ENCODE measurements at regions of chr16 and their contacts with region 1.

Region 1: GRCh38 chr16:50354629-50355456 is 13.9 kb downstream of the BRD7 start:
- DNase-seq: no peak
- ATAC-seq: no peak
- H3K4me3 ChIP-seq: no peak overlapping the region
- H3K27ac ChIP-seq: no peak overlapping the region
- H3K4me1 ChIP-seq: no peaks in the 10 kb centered on the region
- CTCF ChIP-seq: peak; percentile 59
- EP300 ChIP-seq: no peak
- POLR2A ChIP-seq: no peak
- RAD21 ChIP-seq: peak; percentile 51 to 53

Region 2: DNA sequence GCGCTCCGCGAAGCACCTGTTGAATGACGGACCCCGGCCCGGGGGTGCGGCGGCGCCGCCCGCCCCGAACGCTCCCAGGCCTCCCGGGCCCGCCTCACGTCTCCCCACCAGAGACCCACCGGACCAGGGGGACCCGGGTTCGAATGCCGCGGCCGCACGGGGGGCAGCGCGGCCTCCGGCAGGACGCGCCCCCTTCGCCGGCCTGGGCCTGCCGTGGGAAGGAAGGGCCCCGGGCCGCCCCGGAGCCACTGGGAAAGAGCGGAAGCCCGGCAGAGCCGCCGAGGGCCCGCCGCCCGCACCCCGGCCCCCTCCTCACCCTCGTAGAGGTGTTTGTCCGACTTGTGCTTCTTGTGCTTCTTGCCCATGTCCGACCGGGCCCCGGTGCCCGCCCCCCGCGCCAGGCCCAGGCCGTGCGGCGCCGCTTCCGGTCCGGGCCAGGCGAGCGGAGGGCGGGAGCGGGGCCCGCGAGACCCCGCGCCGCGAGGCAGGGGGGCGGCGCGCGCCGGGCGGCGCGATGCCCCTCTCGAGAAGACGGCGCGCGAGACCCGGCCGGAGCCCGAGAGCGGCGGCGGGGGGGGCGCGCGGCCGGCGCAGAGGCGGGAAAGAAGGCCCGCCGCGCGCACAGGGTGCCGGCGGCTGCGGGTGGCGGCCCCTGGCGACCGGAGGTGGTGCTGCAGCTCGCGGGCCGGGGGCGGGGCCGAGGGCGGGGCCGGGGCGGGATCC is 13.7 kb after region 1 on chr16 and contains the start of gene BRD7:
- CTCF ChIA-PET with region 1: interaction called, 11 read pairs
- POLR2A ChIA-PET with region 1: interaction called, 3 read pairs
- DNase-seq: peak; percentile 53 to 54
- ATAC-seq: peak; percentile 77 to 81
- H3K4me3 ChIP-seq: peak within 1 kb of the TSS; percentile 100
- H3K27ac ChIP-seq: peak within 1 kb of the TSS; percentile 95 to 99
- H3K4me1 ChIP-seq: peaks cover 15% of the 10 kb centered on the region
- CTCF ChIP-seq: peak; percentile 69
- EP300 ChIP-seq: no peak
- POLR2A ChIP-seq: no peak
- RAD21 ChIP-seq: no peak
- polyA plus RNA-seq, gene BRD7: 94.5 and 102 TPM in 2 replicates

Region 3: GRCh38 chr16:50425648-50426047 is 70.8 kb after region 1 on chr16:
- CTCF ChIA-PET with region 1: no interaction called
- POLR2A ChIA-PET with region 1: no interaction called
- DNase-seq: no peak
- ATAC-seq: no peak
- H3K4me3 ChIP-seq: no peak overlapping the region
- H3K27ac ChIP-seq: no peak overlapping the region
- H3K4me1 ChIP-seq: no peaks in the 10 kb centered on the region
- CTCF ChIP-seq: no peak
- EP300 ChIP-seq: no peak
- POLR2A ChIP-seq: no peak
- RAD21 ChIP-seq: no peak